ENCODE measurements at regions of chr1 and their contacts with region 1.

Region 1: DNA sequence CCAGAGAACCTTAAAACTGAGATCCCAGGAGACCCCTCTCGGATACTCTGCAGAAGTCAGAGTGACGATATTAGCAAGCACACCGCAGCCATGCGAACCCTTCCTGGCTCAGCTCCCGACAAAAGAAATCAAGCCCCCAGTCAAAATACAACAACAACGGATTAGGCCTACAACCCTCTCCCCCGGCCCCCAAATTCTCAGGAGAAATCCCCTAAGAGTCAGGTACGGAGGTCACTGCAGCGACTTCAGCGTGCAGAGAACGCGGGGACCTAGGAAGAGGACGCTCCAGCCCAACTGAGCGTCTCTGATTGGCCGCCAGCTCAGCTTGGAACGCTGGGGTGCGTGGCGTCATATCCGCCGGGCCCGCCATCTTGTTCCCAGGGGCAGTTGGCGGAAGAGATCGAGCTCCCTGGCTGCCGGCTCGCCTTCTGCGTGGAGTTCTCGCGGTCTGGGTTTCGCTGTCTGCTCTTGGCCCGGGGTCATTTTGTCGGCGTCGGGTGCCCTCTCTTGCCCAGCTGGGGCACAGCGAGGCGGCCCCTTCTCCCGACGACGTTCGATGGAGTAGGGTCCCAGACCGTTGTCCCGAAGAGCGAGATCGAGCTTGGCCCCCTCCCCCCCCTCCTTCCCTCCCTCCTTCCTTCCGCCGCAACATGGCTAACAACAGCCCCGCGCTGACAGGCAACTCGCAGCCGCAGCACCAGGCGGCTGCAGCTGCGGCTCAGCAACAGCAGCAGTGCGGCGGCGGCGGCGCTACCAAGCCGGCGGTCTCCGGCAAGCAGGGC is at the start of gene PRPF38B:
- DNase-seq: peak; percentile 92 to 96 (median 93)
- H3K4me3 ChIP-seq: peak within 1 kb of the TSS; percentile 68 to 94
- H3K4me3 Mint-ChIP-seq: peak within 1 kb of the TSS; percentile 90 to 97 (median 94)
- H3K27ac ChIP-seq: peak within 1 kb of the TSS; percentile 98
- H3K27ac Mint-ChIP-seq: peak within 1 kb of the TSS; percentile 96 to 99 (median 98)
- H3K4me1 ChIP-seq: peaks cover 50% of the 10 kb centered on the region
- H3K4me1 Mint-ChIP-seq: peaks cover 20 to 66% (median 36%) of the 10 kb centered on the region in 4 donors
- H3K27me3 ChIP-seq: no peaks in the 10 kb centered on the region
- H3K27me3 Mint-ChIP-seq: no peaks in the 10 kb centered on the region
- total RNA-seq, gene PRPF38B: 124 to 126 TPM

Region 2: DNA sequence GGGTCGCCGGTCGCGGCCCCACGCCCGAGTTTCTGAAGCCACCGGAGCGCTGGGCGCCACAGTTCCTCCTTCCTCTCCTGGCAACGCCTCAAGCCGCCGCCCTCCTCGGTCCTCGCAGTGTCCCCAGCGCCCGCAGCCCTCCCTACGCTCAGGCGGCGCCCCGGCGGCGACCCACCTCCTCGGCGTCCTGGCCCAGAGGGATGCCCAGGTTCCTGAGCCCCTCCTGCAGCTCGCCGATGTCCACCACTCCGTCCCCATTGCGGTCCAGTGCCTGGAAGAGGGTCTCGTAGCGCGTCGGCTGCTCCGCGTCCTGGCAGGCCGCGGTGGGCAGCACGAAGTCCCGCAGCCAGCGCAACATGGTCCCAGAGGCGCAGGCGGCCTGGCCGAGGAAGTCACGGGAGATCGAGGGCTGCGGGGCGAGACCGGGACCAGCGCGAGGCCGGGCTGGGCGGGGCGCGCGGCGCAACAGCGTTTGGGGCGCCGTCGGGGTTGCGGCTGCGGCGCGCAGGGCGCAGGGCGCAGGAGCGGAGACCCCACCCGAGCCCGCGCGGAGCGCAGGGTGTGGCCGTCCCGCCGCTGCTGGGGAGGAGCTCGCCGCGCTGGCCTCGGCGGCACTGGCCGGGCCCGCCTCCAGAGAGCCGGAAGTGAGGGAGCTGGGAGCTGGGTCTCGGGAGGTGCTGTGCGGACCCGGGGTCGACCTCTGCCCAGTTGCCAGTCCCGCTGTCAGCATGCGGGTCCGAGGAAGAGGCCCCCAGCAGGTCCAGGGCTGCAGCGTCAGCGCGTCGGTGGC is 492.2 kb before region 1 on chr1 and contains the start of gene SLC25A24:
- CTCF ChIA-PET with region 1: no interaction called
- POLR2A ChIA-PET with region 1: interaction called, 10 read pairs
- intact Hi-C with region 1: no loop called
- DNase-seq: peak; percentile 72 to 82 (median 78)
- H3K4me3 ChIP-seq: peak within 1 kb of the TSS; percentile 58 to 80
- H3K4me3 Mint-ChIP-seq: peak within 1 kb of the TSS; percentile 87 to 94 (median 92)
- H3K27ac ChIP-seq: peak within 1 kb of the TSS; percentile 64
- H3K27ac Mint-ChIP-seq: peak within 1 kb of the TSS; percentile 85 to 93 (median 90)
- H3K4me1 ChIP-seq: peaks cover 23% of the 10 kb centered on the region
- H3K4me1 Mint-ChIP-seq: peaks cover 31 to 45% (median 37%) of the 10 kb centered on the region in 4 donors
- H3K27me3 ChIP-seq: no peaks in the 10 kb centered on the region
- H3K27me3 Mint-ChIP-seq: no peaks in the 10 kb centered on the region
- total RNA-seq, gene SLC25A24: 18.6 to 19.1 TPM

Region 3: DNA sequence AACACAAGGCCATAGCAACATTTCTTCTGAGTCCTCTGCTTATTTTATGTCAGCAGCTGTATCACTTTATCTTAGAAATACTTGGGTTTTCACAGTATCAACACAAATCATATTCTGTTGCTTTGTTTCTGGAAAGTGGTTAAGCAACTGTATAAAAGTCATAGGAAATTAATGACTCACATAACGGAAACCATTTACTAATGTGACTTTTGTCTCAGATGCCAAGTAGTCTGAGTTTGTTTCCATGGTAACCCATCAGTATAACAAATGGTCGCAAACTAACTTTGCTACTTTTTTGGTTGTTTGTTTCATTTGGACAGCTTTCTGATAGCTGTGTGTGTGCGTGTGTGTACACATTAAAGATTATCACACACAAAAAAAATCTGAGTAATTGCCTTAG is 101.2 kb before region 1 on chr1:
- CTCF ChIA-PET with region 1: no interaction called
- POLR2A ChIA-PET with region 1: interaction called, 4 read pairs
- intact Hi-C with region 1: loop called (anchors 1 kb)
- DNase-seq: peak; percentile 67 to 86 (median 81)
- H3K4me3 ChIP-seq: no peak overlapping the region
- H3K4me3 Mint-ChIP-seq: peak overlapping the region in 4 of 8 donors; percentile 2 to 58 (median 28)
- H3K27ac ChIP-seq: peak overlapping the region; percentile 51
- H3K27ac Mint-ChIP-seq: peak overlapping the region; percentile 86 to 96 (median 89)
- H3K4me1 ChIP-seq: peaks cover 45% of the 10 kb centered on the region
- H3K4me1 Mint-ChIP-seq: peaks cover 31 to 56% (median 43%) of the 10 kb centered on the region in 4 donors
- H3K27me3 ChIP-seq: no peaks in the 10 kb centered on the region
- H3K27me3 Mint-ChIP-seq: no peaks in the 10 kb centered on the region

Region 4: DNA sequence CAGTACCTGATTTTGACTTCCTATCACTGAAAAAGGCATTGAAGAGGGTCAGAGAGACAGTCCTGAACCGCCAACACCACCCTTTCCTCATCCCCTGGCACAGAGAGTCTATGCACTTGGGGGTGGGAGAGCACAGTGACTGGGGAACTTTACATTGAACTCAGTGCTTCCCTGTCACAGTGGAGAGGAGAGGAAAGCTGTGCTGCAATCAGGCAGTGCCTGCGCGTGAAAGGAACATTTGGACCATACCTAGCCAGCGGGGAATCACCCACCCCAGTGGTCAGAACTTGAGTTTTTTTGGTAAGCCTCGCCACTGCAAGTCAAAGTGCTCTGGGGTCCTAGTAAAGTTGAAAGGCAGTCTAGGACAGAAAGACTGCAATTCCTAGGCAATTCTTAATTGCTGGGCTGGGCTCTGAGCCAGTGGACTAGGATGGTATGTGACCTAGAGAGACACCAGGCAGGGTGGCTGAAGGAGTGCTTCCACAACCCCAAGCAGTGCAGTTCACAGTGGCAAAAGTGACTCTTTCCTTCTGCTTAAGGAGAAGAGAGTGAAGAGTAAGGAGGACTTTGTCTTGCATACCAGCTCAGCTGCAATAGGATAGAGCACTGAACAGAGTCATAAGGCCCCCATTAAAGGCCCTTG is 21.9 kb before region 1 on chr1:
- CTCF ChIA-PET with region 1: interaction called, 5 read pairs
- POLR2A ChIA-PET with region 1: interaction called, 11 read pairs
- intact Hi-C with region 1: no loop called
- DNase-seq: no peak
- H3K4me3 ChIP-seq: no peak overlapping the region
- H3K4me3 Mint-ChIP-seq: no peak overlapping the region
- H3K27ac ChIP-seq: no peak overlapping the region
- H3K27ac Mint-ChIP-seq: peak overlapping the region in 3 of 7 donors; percentile 2 to 73 (median 25)
- H3K4me1 ChIP-seq: no peaks in the 10 kb centered on the region
- H3K4me1 Mint-ChIP-seq: peaks cover 4 to 6% (median 4%) of the 10 kb centered on the region in 4 donors
- H3K27me3 ChIP-seq: no peaks in the 10 kb centered on the region
- H3K27me3 Mint-ChIP-seq: peaks cover 0 to 1% of the 10 kb centered on the region in 2 donors

Region 5: DNA sequence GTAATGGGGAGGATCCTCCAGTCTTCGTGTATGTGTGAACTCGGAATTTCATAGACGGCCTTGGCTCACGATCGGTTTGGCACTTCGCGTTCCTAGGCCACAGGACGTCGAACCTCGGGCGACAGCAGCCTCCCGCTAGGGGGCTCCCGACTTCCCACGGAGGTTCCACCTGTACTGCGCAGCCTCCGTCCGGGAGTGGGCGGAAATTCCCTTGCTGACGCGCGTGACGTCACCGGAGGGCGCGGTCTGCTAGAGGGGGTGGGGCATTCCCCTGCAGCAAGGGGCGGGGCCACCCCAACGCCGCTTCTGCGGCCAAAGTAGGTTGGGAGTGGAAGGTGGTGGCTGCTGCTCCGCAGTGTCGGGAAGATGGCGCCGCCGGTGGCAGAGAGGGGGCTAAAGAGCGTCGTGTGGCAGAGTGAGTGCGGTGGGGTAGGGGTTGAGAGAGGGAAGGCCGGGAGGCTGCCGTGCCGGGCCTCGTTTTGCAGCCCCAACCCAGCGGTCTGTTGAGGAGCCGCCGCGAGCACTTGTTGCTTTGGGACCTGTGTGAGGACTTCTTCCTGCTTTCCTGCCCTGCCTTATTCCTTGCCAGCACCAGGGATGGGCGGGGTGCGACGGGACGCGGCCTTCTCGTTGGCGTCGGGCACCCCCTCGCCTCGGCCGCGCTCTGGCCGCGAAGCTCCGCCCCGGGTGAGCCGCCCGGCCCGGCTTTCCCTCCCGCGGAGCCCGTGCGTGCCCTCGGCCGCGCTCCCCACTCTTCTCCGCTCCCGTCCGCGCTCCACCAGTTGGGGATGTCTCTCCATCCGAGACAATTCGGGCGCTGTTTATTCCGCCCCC is 54.5 kb after region 1 on chr1 and contains the start of gene STXBP3:
- CTCF ChIA-PET with region 1: interaction called, 16 read pairs
- POLR2A ChIA-PET with region 1: interaction called, 30 read pairs
- intact Hi-C with region 1: loop called (anchors 1 kb)
- DNase-seq: peak; percentile 98 to 99 (median 99)
- H3K4me3 ChIP-seq: peak within 1 kb of the TSS; percentile 57 to 85
- H3K4me3 Mint-ChIP-seq: peak within 1 kb of the TSS; percentile 94 to 100 (median 99)
- H3K27ac ChIP-seq: peak within 1 kb of the TSS; percentile 95
- H3K27ac Mint-ChIP-seq: peak within 1 kb of the TSS; percentile 94 to 100 (median 99)
- H3K4me1 ChIP-seq: peaks cover 41% of the 10 kb centered on the region
- H3K4me1 Mint-ChIP-seq: peaks cover 25 to 47% (median 34%) of the 10 kb centered on the region in 4 donors
- H3K27me3 ChIP-seq: no peaks in the 10 kb centered on the region
- H3K27me3 Mint-ChIP-seq: no peaks in the 10 kb centered on the region
- total RNA-seq, gene STXBP3: 90.9 to 92.5 TPM

Region 6: GRCh38 chr1:108897865-108898720 is 206.0 kb after region 1 on chr1:
- CTCF ChIA-PET with region 1: interaction called, 34 read pairs
- POLR2A ChIA-PET with region 1: interaction called, 7 read pairs
- intact Hi-C with region 1: loop called (anchors 1 kb)
- DNase-seq: peak; percentile 43 to 63 (median 55)
- H3K4me3 ChIP-seq: no peak overlapping the region
- H3K4me3 Mint-ChIP-seq: no peak overlapping the region
- H3K27ac ChIP-seq: no peak overlapping the region
- H3K27ac Mint-ChIP-seq: peak overlapping the region in 1 of 7 donors; percentile 38
- H3K4me1 ChIP-seq: no peaks in the 10 kb centered on the region
- H3K4me1 Mint-ChIP-seq: peaks cover 0 to 1% (median 0%) of the 10 kb centered on the region in 4 donors
- H3K27me3 ChIP-seq: no peaks in the 10 kb centered on the region
- H3K27me3 Mint-ChIP-seq: no peaks in the 10 kb centered on the region

Region 7: GRCh38 chr1:109050266-109050995 is 358.3 kb after region 1 on chr1:
- CTCF ChIA-PET with region 1: no interaction called
- POLR2A ChIA-PET with region 1: no interaction called
- intact Hi-C with region 1: no loop called
- DNase-seq: no peak
- H3K4me3 ChIP-seq: no peak overlapping the region
- H3K4me3 Mint-ChIP-seq: no peak overlapping the region
- H3K27ac ChIP-seq: no peak overlapping the region
- H3K27ac Mint-ChIP-seq: no peak overlapping the region
- H3K4me1 ChIP-seq: no peaks in the 10 kb centered on the region
- H3K4me1 Mint-ChIP-seq: no peaks in the 10 kb centered on the region
- H3K27me3 ChIP-seq: no peaks in the 10 kb centered on the region
- H3K27me3 Mint-ChIP-seq: peaks cover 0 to 1% of the 10 kb centered on the region in 2 donors

Region 8: GRCh38 chr1:109099938-109100773 is 408.0 kb after region 1 on chr1:
- CTCF ChIA-PET with region 1: interaction called, 8 read pairs
- POLR2A ChIA-PET with region 1: interaction called, 24 read pairs
- intact Hi-C with region 1: loop called (anchors 1 kb)
- DNase-seq: peak; percentile 96 to 98 (median 97)
- H3K4me3 ChIP-seq: peak overlapping the region; percentile 80 to 81
- H3K4me3 Mint-ChIP-seq: peak overlapping the region; percentile 91 to 100 (median 96)
- H3K27ac ChIP-seq: peak overlapping the region; percentile 80
- H3K27ac Mint-ChIP-seq: peak overlapping the region; percentile 90 to 99 (median 98)
- H3K4me1 ChIP-seq: peaks cover 15% of the 10 kb centered on the region
- H3K4me1 Mint-ChIP-seq: peaks cover 7 to 20% (median 16%) of the 10 kb centered on the region in 4 donors
- H3K27me3 ChIP-seq: no peaks in the 10 kb centered on the region
- H3K27me3 Mint-ChIP-seq: no peaks in the 10 kb centered on the region